Cardiac septum (tissue), 1 donor: ENCODE measurements at regions of chr12 and their contacts with region 1.

Region 1: GRCh38 chr12:6062757-6063735 is 61.4 kb downstream of the VWF start:
- DNase-seq: peak; percentile 82

Region 2: DNA sequence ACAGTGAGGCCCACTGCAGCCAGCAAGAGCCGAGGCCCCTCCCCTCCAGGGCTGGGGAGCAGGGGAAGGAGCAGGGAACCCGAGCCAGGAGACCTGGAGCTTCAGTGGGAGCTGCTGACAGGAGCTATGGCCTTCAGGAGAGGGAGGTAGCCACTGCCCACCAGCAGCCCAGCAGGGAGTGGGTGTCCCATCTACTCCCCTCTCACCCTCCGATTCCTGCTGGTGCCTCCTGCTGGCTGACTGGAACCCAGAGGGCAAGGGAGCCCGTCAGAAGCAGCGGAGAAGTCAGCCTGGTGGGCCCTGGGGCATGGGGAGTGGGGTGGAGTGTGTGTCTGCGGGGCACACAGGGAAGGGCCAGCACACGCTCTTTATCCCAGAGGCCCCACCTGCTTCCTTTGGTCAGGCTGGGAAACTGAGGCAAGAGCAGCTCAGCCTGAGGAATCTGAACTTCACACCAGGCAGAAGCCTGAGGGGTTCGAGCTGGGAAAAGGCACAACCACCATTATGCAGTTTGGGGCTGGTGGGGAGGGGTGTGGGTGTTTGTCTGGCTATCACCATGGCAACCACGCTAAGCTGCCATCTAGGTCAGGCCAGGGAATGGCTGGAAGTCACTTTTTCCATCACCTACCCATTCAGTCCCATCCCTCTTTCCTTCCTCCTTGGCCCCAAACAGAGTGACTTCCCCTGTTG is 210.6 kb after region 1 on chr12:
- intact Hi-C with region 1: no loop called
- DNase-seq: no peak

Region 3: GRCh38 chr12:6285063-6285477 is 222.0 kb after region 1 on chr12:
- intact Hi-C with region 1: loop called (anchors 2 kb)
- DNase-seq: peak; percentile 82